ENCODE measurements at regions of chr17 and their contacts with region 1.

Region 1: DNA sequence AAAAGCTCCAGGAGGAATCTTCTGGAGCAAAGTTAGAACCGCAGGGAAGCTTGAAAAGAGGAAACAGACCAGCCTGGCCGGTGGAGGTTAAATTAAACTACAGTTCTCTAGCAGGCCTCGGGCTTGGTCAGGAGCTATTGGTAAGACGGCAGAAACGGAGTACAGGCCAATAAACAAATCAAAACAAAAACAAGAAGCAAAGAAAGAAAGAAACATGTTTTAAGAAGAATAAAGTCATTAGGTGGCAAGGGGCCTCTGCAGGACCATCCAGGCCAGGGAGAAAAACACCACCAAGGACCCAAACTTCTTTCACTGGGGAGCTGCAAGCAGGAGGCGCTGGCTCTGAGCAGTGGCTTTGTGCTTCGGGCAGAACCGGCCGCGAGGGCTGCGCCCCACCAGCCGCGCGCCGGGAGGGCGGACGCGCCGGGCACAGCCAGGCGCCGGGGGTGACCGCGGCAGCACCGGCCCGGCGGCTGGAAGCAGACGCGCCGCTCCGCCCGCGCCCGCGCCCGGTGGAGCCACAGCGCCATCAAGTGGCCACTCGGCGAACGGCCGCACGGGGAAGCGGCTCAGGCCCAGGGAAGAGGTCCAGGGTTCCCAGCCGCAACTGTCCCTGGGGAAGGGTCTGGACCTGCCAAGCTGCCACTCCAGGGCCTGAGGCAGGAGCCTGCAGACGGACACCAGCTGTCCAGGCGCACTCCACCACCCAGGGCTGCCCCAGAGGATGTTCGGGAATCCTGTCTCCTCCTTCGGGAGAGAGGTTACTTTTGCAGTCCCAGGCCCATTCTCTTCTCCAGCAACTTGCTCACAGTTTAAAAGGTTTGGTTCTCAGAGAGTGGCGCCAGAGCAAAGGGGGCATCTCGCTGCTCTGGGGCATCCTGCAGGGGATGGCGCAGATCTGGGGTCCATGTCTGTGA is 419.4 kb downstream of the SOX9 start:
- DNase-seq: peak; percentile 85
- ATAC-seq: peak; percentile 96

Region 2: DNA sequence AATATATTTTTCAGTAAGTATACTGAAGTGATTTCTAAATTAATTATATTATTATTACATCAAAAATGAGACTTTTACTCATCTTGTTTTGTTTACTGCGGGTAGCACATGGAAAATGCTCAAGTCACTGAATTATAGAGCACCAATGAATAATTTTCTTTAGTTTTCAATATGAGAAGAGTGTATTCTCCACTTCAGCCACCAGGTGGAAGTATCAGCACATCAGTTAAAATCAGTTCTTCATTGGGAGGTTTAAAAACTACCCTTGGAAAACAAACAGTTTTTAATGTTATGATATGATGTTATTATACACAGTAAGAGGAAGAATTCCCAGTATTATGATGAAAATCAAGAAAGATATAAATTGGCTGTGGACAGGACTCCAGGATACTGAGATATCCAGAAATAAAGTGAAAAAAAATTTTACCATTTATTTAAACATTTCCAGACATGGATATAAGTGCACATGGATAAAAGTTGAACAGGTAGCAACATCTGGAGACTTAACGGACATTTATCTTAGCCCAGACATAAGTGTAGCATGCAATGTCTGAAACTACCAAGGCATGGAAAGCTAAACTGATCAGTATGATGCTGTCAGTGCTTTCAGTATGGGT is 1903.6 kb before region 1 on chr17:
- intact Hi-C with region 1: loop called (anchors 5 kb)
- DNase-seq: no peak
- ATAC-seq: no peak

Region 3: DNA sequence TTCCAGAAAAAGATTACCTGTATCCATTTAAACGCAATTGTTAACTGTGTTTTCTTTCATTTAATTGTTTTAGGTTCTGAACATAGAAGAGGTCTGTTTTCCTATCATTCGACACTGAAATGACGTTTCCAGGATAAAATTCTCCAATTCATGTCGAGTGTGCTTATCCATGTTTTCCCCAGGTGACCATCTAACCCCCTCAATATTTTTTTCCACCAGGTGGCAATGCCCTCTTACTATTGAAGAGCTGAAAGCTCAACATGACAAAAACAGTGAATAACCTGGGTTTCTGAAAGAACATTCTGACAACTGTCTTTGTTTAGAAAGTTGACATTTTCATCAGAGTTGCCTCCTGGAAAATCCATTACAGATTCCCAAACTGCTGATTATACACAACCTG is 1422.2 kb before region 1 on chr17:
- intact Hi-C with region 1: loop called (anchors 2 kb)
- DNase-seq: no peak
- ATAC-seq: no peak

Region 4: DNA sequence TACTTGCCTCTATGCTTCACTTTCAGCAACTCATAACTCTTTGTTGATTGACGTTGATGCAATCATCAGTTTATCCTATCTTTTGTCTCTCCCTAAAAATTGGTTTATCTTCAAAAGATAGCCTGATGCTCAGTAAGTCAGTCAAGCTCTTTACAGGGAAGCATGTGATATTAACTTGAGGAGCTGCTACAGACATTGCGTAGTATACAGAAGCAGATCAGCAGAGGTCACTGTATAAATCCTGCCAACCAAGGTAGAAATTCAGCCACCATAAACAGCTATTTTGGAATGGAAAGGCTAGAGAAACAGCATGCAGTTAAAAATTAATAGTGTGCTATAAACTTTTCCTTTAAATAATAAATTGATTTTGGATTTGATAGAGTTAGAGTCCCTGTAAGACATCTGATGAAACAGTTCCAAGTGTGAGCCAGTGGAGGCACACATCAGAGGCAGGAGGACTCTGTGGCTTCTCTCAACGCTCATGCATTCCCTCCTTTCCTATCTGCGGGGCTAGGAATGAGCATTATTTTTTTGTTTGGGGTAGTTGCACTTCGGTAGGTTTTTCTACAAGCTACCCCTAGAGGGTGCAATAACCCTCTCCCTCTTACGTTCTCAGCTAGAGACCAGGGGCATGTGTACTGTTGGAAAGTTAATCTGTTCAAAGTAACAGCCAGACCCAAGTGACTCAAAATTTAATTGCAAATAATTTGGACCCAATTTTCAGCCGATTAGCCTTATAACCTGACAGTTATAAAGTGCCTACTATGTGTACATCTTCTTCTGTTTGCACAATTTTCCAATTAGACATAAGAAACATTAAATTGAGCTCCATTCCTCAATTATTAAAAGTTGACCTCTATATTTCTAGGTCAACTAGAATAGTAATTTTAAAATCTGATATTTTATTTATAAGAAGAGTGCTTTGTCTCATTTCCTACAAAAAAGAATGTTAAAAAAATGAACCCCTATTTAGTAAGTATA is 1067.1 kb before region 1 on chr17:
- intact Hi-C with region 1: loop called (anchors 2 kb)
- DNase-seq: no peak
- ATAC-seq: peak; percentile 52

Measured in Right ventricle myocardium inferior (tissue), 1 donor.